ENCODE measurements at regions of chr2 and their contacts with region 1.

Region 1: GRCh38 chr2:113370478-113371091 is 66.9 kb upstream of the ZNG1B start:
- DNase-seq: peak; percentile 65
- ATAC-seq: peak; percentile 95

Region 2: GRCh38 chr2:113203901-113204519 is 166.6 kb before region 1 on chr2:
- intact Hi-C with region 1: loop called (anchors 5 kb)
- DNase-seq: peak; percentile 75
- ATAC-seq: peak; percentile 82

Region 3: GRCh38 chr2:113248997-113249770 is 121.4 kb before region 1 on chr2:
- intact Hi-C with region 1: loop called (anchors 5 kb)
- DNase-seq: peak; percentile 86
- ATAC-seq: peak; percentile 89

Region 4: GRCh38 chr2:114261366-114261765 is 890.8 kb after region 1 on chr2:
- intact Hi-C with region 1: no loop called
- DNase-seq: no peak
- ATAC-seq: no peak

Measured in Right ventricle myocardium superior (tissue), 1 donor.